AG04450 (cell line): ENCODE measurements at regions of chr7 and their contacts with region 1.

Region 1: GRCh38 chr7:24039991-24040624 is 243.9 kb upstream of the NPY start:
- DNase-seq: no peak
- H3K4me3 ChIP-seq: no peak overlapping the region
- H3K27ac ChIP-seq: no peak overlapping the region
- H3K27me3 ChIP-seq: no peaks in the 10 kb centered on the region
- CTCF ChIP-seq: no peak

Region 2: DNA sequence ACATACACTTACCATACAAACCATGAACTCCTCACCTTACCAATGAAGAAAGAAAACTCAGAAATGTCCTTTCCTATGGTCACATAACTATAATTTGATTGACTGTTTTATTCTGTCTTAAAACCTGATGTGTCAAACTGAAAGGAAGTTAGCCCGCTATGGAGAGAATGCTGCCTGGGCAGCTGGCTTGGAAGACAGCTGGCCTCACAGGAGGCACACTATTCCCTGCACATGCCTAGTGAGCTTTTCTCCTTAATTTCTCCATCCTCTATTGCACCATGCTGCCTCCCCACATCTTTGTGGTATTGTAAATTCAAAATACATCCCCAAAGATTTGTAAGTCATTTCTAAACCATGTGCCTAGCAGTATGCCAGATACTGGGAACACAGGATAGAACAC is 166.8 kb before region 1 on chr7:
- CTCF ChIA-PET with region 1: no interaction called
- POLR2A ChIA-PET with region 1: no interaction called
- DNase-seq: no peak
- H3K4me3 ChIP-seq: no peak overlapping the region
- H3K27ac ChIP-seq: no peak overlapping the region
- H3K27me3 ChIP-seq: no peaks in the 10 kb centered on the region
- CTCF ChIP-seq: no peak

Region 3: GRCh38 chr7:23969443-23969842 is 70.7 kb before region 1 on chr7:
- CTCF ChIA-PET with region 1: interaction called, 14 read pairs
- POLR2A ChIA-PET with region 1: no interaction called
- DNase-seq: no peak
- H3K4me3 ChIP-seq: no peak overlapping the region
- H3K27ac ChIP-seq: no peak overlapping the region
- H3K27me3 ChIP-seq: no peaks in the 10 kb centered on the region
- CTCF ChIP-seq: no peak

Region 4: DNA sequence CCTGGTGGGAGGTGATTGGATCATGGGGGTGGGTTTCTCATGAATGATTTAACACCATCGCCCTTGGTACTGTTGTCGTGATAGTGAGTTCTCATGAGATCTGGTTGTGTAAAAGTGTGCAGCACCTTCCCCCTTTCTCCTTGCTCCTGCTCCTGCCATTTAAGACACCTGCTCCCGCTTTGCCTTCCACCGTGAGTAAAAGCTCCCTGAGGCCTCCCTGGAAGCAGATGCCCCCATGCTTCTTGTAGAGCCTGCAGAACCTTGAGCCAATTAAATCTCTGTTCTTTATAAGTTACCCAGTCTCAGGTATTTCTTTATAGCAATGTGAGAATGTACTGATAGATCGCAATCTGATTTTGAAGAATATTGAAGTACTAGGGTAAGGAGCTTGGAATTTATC is 42.1 kb before region 1 on chr7:
- CTCF ChIA-PET with region 1: no interaction called
- POLR2A ChIA-PET with region 1: no interaction called
- DNase-seq: no peak
- H3K4me3 ChIP-seq: no peak overlapping the region
- H3K27ac ChIP-seq: no peak overlapping the region
- H3K27me3 ChIP-seq: peaks cover 3% of the 10 kb centered on the region
- CTCF ChIP-seq: no peak

Region 5: DNA sequence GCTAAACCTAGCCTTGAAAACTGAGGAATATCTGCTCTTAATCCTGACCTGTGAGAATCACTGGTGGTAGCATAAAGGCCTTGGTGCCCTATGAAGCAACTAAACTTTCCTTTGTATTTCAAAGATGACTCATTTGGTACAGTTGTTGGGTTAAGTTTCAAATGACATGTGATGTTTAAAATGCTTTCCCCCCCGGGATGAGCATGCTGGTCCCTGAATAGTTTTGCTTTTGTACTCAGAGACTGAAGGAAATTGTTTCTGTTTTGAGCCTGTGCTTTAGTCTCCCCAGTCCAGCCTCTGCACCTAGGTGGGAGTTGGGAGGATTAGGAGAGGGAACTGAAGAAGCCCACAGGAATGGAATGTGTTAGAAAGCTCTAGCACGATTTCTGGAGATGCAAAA is 15.0 kb before region 1 on chr7:
- CTCF ChIA-PET with region 1: no interaction called
- POLR2A ChIA-PET with region 1: no interaction called
- DNase-seq: peak; percentile 29
- H3K4me3 ChIP-seq: no peak overlapping the region
- H3K27ac ChIP-seq: peak overlapping the region; percentile 77
- H3K27me3 ChIP-seq: no peaks in the 10 kb centered on the region
- CTCF ChIP-seq: no peak